ENCODE measurements at regions of chr22 and their contacts with region 1.

Region 1: GRCh38 chr22:21735200-21736076 is at the start of gene YPEL1:
- DNase-seq: peak; percentile 96
- H3K4me3 ChIP-seq: peak within 1 kb of the TSS; percentile 74
- H3K27ac ChIP-seq: peak within 1 kb of the TSS; percentile 69
- H3K4me1 ChIP-seq: peaks cover 27% of the 10 kb centered on the region
- CTCF ChIP-seq: no peak
- total RNA-seq, gene YPEL1: 15.1 and 18.8 TPM in 2 replicates

Region 2: GRCh38 chr22:21867528-21868266 is 132.3 kb after region 1 on chr22 and contains the start of gene MAPK1:
- CTCF ChIA-PET with region 1: no interaction called
- POLR2A ChIA-PET with region 1: no interaction called
- intact Hi-C with region 1: loop called (anchors 2 kb)
- DNase-seq: peak; percentile 93
- H3K4me3 ChIP-seq: peak within 1 kb of the TSS; percentile 99
- H3K27ac ChIP-seq: peak within 1 kb of the TSS; percentile 71
- H3K4me1 ChIP-seq: peaks cover 30% of the 10 kb centered on the region
- CTCF ChIP-seq: peak; percentile 65
- total RNA-seq, gene MAPK1: 28.9 and 39.6 TPM in 2 replicates

Region 3: GRCh38 chr22:22508274-22509176 is 773.1 kb after region 1 on chr22 and contains the start of gene ZNF280B:
- CTCF ChIA-PET with region 1: no interaction called
- POLR2A ChIA-PET with region 1: no interaction called
- intact Hi-C with region 1: loop called (anchors 10 kb)
- DNase-seq: peak; percentile 94
- H3K4me3 ChIP-seq: peak within 1 kb of the TSS; percentile 77
- H3K27ac ChIP-seq: no peak within 1 kb of the TSS
- H3K4me1 ChIP-seq: peaks cover 4% of the 10 kb centered on the region
- CTCF ChIP-seq: peak; percentile 82
- total RNA-seq, gene ZNF280B: 2.9 and 3.4 TPM in 2 replicates

Measured in OCI-LY7 (cell line).